ENCODE measurements at regions of chr3 and their contacts with region 1.

Region 1: GRCh38 chr3:167209021-167209420 is 171.1 kb downstream of the ZBBX start:
- DNase-seq: no peak
- H3K4me3 ChIP-seq: no peak overlapping the region
- H3K27ac ChIP-seq: no peak overlapping the region
- H3K4me1 ChIP-seq: no peaks in the 10 kb centered on the region
- H3K27me3 ChIP-seq: no peaks in the 10 kb centered on the region
- CTCF ChIP-seq: no peak
- POLR2A ChIP-seq: no peak

Region 2: DNA sequence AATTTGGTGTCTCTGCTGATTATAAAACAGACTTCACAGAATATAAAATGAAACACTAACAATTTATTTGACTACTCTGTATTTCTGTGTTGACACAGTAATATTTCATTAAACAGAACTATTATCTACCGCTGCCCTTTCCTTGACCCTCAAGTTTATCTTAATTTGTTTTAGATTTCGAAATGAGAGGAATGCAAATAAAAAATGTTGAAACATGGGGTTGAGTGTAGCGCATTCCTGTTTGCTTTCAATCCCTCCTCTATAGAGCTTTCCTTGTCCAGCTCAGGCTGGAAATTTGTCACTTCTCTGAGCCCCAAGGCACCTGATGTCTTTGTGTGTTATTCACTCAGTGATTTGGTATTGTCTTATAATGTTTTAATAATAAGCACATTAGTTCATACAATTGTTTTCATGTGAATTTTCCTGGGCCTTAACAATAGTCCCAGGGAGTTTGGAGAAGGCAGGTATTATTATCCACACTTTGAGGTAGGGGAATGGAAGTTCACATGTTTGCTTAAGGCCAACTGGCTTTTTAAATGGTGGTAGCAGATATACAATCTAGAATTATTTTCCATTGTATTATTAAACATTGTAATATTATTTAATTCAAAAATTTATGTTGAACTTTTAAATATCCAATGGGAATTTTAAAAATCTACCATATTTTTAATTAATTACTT is 379.0 kb before region 1 on chr3:
- CTCF ChIA-PET with region 1: no interaction called
- POLR2A ChIA-PET with region 1: no interaction called
- dilution Hi-C with region 1: no loop called
- intact Hi-C with region 1: no loop called
- DNase-seq: no peak
- H3K4me3 ChIP-seq: no peak overlapping the region
- H3K27ac ChIP-seq: no peak overlapping the region
- H3K4me1 ChIP-seq: no peaks in the 10 kb centered on the region
- H3K27me3 ChIP-seq: no peaks in the 10 kb centered on the region
- CTCF ChIP-seq: no peak
- POLR2A ChIP-seq: no peak

Region 3: GRCh38 chr3:166877971-166878370 is 331.1 kb before region 1 on chr3:
- CTCF ChIA-PET with region 1: no interaction called
- POLR2A ChIA-PET with region 1: no interaction called
- dilution Hi-C with region 1: no loop called
- intact Hi-C with region 1: no loop called
- DNase-seq: no peak
- H3K4me3 ChIP-seq: no peak overlapping the region
- H3K27ac ChIP-seq: no peak overlapping the region
- H3K4me1 ChIP-seq: no peaks in the 10 kb centered on the region
- H3K27me3 ChIP-seq: no peaks in the 10 kb centered on the region
- CTCF ChIP-seq: no peak
- POLR2A ChIP-seq: no peak

Region 4: DNA sequence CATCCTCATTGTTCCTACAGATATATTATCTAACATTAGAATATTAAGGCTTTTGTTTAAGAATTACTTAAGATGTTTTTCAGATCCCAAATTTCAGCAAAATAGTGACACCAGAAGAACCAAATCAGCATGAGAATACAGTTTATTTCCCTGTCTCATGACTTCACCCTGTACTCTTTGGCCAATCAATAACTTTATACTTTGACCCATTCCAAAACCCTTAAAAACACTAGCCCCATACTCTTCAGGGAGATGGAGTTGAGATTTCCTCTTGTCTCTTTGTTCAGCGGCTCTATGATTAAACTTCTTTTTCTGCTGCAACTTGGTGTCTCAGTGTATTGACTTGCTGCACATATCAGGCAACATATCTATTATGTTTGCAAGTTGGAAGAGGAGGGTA is 36.6 kb before region 1 on chr3:
- CTCF ChIA-PET with region 1: no interaction called
- POLR2A ChIA-PET with region 1: no interaction called
- dilution Hi-C with region 1: no loop called
- intact Hi-C with region 1: loop called (anchors 1 kb)
- DNase-seq: no peak
- H3K4me3 ChIP-seq: no peak overlapping the region
- H3K27ac ChIP-seq: no peak overlapping the region
- H3K4me1 ChIP-seq: no peaks in the 10 kb centered on the region
- H3K27me3 ChIP-seq: no peaks in the 10 kb centered on the region
- CTCF ChIP-seq: no peak
- POLR2A ChIP-seq: no peak

Region 5: DNA sequence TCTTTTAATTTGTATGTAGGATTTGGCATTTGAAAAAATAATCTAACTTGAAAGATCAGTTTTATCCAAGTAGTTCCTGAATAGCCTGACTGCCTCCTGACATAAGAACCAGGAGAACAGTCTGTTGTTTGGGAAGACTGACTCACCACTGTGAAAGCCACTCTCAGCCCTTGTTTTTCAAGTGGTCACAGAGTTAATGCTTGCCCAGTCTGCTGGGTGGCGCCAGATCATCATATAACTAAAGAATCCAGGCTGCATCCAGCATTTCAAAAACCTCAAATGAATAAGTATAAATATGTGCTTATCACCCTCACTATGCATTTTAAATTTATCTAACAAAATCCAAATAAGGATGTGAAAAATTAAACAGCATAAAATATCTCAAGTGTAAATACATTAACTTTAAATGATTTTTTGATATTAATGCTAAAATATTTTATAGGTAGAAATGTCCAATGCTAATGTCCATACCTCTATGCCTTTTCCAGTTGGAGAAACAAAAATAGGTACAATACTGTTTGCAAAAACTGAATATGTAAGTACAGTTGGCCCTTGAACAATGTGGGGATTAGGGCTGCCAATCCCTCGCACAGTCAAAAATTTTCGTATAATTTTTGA is 198.0 kb after region 1 on chr3:
- CTCF ChIA-PET with region 1: no interaction called
- POLR2A ChIA-PET with region 1: no interaction called
- dilution Hi-C with region 1: no loop called
- intact Hi-C with region 1: no loop called
- DNase-seq: peak; percentile 44
- H3K4me3 ChIP-seq: no peak overlapping the region
- H3K27ac ChIP-seq: no peak overlapping the region
- H3K4me1 ChIP-seq: no peaks in the 10 kb centered on the region
- H3K27me3 ChIP-seq: no peaks in the 10 kb centered on the region
- CTCF ChIP-seq: peak; percentile 9 to 25
- POLR2A ChIP-seq: no peak

Measured in endothelial cell of umbilical vein (primary cell).